Activated CD4-positive, alpha-beta memory T cell treated with anti-CD3 and anti-CD28 coated beads for 36 hours (primary cell): ENCODE measurements at regions of chr1 and their contacts with region 1.

Region 1: DNA sequence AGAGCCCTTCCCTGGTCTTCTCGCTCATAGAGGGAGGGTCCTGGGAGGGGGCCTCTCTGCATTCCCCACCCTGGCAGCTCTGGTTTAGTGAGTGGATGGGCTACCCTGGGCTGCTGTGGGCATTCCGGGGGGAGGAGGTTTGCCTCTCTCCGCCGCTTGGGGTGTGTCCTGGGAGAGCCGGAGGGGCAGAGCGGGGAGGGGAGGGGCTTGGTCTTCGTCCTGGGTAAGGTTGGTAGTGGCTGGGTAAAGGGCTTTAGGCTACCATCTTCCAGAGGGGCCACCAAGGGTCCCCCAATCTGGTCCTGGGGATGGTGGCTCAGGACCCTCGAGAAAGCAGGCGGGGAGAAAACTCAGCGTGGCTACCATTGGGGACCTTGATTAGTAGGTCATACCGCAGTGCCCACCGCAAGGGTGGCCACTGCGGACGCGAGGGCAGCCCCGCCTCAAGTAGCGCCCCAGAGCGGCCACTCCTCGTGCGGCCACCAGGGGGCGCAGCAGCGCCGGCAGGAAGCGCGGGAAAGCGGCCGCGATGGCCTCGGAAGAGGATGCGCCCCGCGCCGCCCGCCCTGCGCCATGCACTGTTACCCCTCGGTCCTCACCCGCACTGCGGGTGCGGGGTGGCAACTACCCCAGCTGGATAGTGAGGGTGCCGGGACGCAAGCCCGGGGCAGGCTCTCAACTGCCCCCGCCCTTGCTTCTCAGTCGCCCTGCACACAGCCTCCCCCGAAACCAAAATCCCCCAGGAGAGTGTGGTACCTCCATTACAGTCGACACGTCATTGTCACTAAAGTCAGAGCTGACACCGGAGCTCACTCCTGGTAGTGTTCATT is 44.1 kb upstream of the SLC25A33 start:
- DNase-seq: peak; percentile 76
- H3K4me3 Mint-ChIP-seq: peak overlapping the region; percentile 65
- H3K27ac Mint-ChIP-seq: no peak overlapping the region
- H3K4me1 Mint-ChIP-seq: peaks cover 3% of the 10 kb centered on the region
- H3K27me3 Mint-ChIP-seq: peaks cover 4% of the 10 kb centered on the region

Region 2: DNA sequence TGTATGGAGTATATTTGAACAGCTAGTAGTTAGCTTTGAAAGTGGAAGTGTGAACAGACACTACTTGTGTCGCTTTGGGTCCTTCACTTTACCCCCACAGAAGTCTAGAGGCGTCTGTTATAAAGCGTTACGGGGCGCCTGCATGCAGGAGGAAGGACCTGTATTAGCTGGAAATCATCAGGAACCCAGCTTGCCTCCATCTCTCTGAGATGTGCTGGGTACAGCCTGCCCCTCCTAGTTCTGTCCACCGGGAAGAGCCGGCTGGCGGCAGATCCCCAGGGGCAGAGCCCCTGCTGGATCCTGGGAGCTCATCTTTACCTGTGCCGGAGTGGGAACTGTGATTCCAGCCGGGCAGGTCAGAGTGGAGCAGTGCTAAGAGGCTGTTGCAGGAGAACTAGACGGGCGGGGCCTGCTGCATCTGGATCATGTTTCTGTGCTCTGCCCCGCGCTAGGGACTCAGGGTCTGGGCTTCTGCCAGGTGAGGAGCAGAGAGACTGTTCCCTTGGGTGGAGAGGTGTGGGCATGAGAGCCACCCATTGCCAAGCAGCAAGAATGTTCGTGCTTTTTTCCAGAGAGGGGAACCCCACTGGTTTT is 224.8 kb before region 1 on chr1:
- CTCF ChIA-PET with region 1: interaction called, 112 read pairs
- POLR2A ChIA-PET with region 1: no interaction called
- intact Hi-C with region 1: loop called (anchors 2 kb)
- DNase-seq: no peak
- H3K4me3 Mint-ChIP-seq: no peak overlapping the region
- H3K27ac Mint-ChIP-seq: no peak overlapping the region
- H3K4me1 Mint-ChIP-seq: peaks cover 9% of the 10 kb centered on the region
- H3K27me3 Mint-ChIP-seq: peaks cover 3% of the 10 kb centered on the region

Region 3: DNA sequence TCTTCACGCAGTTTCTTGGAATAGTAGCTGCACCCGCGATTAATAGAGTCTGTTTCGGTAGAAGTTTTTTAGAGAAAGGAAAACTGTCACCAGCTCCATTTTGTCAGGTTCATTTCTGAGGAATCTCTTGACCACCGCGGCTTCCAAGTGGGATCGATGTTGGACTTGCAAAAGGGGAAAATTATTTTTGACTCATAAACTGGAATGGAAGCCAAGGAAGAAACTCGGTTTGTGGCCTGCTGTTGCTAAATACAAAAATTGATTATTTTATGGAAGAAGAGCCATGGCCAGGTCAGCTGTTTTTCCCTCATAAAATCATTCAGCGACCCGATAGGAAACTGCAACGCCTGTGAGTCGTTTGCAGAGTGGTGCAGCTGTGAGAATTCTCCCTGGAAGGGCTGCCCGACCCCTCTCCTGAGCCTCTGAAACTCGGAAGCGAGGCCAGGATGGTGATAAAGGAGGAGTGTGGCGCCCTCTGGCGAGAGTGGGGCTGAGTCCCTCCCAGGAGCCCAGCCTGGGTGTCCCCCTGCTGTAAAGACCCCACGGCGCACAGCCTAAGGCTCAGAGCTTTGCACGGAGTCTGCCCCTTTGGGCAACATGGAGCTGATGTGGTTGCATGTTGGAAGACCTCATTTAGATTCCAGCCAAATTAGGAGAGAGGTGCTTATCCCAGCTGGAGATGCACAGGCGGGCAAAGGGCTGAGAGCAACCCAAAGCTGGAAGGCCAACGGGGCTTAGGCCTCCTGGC is 39.5 kb before region 1 on chr1:
- CTCF ChIA-PET with region 1: interaction called, 24 read pairs
- POLR2A ChIA-PET with region 1: no interaction called
- intact Hi-C with region 1: no loop called
- DNase-seq: peak; percentile 74
- H3K4me3 Mint-ChIP-seq: no peak overlapping the region
- H3K27ac Mint-ChIP-seq: no peak overlapping the region
- H3K4me1 Mint-ChIP-seq: no peaks in the 10 kb centered on the region
- H3K27me3 Mint-ChIP-seq: no peaks in the 10 kb centered on the region

Region 4: DNA sequence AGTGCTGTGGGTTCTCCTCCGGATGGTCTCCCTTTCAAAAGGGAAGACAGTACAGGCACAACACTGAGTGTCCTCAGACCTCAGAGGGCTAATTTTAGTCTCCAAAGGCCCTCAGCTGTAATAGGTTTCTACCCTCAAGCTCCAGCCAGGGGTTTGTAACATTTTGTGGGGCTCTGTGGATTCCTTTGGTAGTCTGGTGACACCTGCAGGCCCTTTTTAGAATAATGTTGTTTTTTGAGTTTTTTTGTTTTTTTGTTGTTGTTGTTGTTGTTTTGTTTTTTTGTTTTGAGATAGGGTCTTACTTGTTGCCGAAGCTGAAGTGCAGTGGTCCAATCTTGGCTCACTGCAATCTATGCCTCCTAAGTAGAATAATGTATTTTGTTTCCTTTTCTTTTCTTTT is 78.6 kb after region 1 on chr1:
- CTCF ChIA-PET with region 1: interaction called, 14 read pairs
- POLR2A ChIA-PET with region 1: no interaction called
- intact Hi-C with region 1: loop called (anchors 2 kb)
- DNase-seq: no peak
- H3K4me3 Mint-ChIP-seq: no peak overlapping the region
- H3K27ac Mint-ChIP-seq: no peak overlapping the region
- H3K4me1 Mint-ChIP-seq: no peaks in the 10 kb centered on the region
- H3K27me3 Mint-ChIP-seq: no peaks in the 10 kb centered on the region